ENCODE measurements at regions of chr10 and their contacts with region 1.

Region 1: GRCh38 chr10:3467052-3467951 is 294.7 kb upstream of the PITRM1 start:
- DNase-seq: peak; percentile 81 to 87
- ATAC-seq: peak; percentile 69 to 89 (median 82)
- H3K4me3 ChIP-seq: peak overlapping the region in 6 of 10 donors; percentile 7 to 35 (median 20)
- H3K27ac ChIP-seq: peak overlapping the region; percentile 46 to 94 (median 88)
- H3K4me1 ChIP-seq: peaks cover 0 to 71% (median 59%) of the 10 kb centered on the region in 9 donors
- H3K27me3 ChIP-seq: no peaks in the 10 kb centered on the region
- CTCF ChIP-seq: peak; percentile 24 to 71 (median 53)

Region 2: DNA sequence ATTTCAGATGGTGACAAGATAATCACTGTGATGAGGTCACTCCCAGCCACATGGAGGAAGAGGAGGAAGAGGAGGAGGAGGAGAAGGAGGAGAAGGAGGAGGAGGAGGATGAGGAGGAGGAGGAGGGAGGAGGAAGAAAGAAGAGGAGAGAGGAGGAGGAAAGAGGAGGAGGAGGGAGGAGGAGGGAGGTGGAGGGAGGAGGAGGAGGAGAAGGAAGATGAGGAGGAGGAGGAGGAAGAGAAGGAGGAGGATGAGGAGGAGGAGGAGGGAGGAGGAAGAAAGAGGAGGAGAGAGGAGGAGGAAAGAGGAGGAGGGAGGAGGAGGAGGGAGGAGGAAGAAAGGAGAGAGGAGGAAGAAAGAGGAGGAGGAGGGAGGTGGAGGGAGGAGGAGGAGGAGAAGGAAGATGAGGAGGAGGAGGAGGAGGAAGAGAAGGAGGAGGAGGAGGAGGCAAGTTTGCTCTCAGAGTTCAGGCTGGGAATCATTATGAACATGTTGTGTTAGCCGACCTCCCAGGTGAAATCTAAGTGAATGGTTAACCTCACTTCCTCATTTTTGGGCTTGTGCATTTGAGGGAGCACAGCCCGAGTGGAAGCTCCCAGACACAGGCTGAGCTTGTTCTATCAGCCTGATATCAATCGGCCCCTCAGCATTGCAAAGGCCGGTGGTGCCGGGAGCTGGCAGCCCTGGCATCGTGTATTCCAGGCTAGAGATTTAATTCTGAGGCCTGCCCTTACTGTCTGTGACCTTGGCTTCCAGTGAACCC is 58.5 kb before region 1 on chr10:
- intact Hi-C with region 1: no loop called
- DNase-seq: no peak
- ATAC-seq: no peak
- H3K4me3 ChIP-seq: no peak overlapping the region
- H3K27ac ChIP-seq: no peak overlapping the region
- H3K4me1 ChIP-seq: peaks cover 0 to 20% (median 4%) of the 10 kb centered on the region in 9 donors
- H3K27me3 ChIP-seq: no peaks in the 10 kb centered on the region
- CTCF ChIP-seq: no peak

Region 3: DNA sequence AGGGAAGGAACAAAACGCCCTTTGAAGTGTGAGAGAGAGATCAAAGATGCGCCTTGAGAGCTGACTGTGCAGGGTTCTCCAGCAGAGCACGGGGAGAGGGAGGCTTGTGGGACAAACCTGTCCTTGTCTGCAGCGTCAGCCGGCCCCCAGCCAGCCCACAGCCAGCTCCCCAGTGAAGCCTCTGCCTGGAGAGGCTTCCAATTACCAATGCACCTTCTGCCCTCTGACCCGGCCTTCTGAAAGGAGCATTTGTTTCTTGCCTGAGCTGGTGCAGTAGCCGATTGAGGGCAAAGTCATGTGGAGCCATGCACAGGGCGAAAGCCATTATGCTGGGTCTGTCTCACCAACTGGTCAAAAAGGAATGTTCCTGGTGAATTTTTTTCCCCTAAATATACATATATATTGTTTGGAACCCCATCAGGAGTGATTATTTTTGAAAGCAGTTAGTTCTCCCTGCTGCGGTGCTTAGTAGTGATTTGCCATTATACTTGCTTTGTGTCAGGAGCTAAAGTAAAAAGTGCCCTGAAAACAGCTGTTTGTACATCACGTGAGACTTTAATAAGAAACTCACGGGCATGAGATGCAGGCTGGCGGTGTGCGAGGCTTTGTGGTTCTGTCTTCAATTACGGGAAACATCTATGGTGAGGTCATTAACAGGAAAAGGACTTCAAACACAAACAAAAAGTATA is 49.1 kb after region 1 on chr10:
- intact Hi-C with region 1: loop called in 1 of 10 experiments (anchors 5 kb)
- DNase-seq: no peak
- ATAC-seq: peak in 1 of 8 donors; percentile 37
- H3K4me3 ChIP-seq: no peak overlapping the region
- H3K27ac ChIP-seq: peak overlapping the region in 3 of 10 donors; percentile 25 to 76 (median 68)
- H3K4me1 ChIP-seq: peaks cover 0 to 20% (median 6%) of the 10 kb centered on the region in 9 donors
- H3K27me3 ChIP-seq: no peaks in the 10 kb centered on the region
- CTCF ChIP-seq: no peak

Region 4: DNA sequence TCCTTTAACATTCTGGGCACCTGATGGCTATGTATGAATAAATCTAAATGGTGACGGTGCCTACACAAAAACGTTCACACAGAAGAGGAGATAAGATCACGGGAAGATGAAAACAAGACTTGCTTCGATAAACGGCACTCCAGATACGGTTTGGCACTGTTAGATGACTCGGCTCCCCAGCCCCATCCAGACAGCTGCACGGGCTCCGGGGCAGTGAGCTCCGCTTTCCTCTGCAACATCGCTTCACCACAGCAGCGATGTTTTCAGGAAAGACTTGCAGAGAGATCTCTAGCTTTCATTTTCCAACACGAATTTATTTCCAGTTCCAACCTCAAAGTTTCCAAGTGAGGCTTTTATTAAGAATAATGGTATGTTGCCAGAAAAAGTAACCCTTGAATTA is 185.6 kb after region 1 on chr10:
- intact Hi-C with region 1: no loop called
- DNase-seq: no peak
- ATAC-seq: no peak
- H3K4me3 ChIP-seq: peak overlapping the region in 7 of 10 donors; percentile 3 to 41 (median 16)
- H3K27ac ChIP-seq: no peak overlapping the region
- H3K4me1 ChIP-seq: peaks cover 0 to 10% (median 0%) of the 10 kb centered on the region in 9 donors
- H3K27me3 ChIP-seq: no peaks in the 10 kb centered on the region
- CTCF ChIP-seq: no peak

Region 5: DNA sequence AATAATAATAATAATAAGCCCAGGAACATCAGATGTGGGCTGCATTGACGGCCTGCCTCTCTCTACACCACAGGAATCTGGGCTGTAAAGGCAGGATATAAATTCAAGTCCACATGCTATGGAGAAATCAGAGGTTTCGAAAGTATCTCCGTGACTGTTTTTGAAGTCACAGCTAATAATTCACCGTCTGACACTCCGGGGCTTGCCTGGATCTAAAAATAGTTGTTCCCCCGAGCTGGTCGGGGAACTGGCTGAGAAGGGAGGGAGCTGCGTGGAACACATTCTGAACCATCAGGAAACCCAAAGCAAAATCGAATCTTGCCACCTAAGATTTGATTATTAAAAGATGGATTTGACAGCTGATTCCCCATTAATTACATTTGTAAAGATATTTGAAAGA is 282.3 kb after region 1 on chr10:
- intact Hi-C with region 1: loop called in 1 of 10 experiments (anchors 5 kb)
- DNase-seq: no peak
- ATAC-seq: peak; percentile 47 to 81 (median 73)
- H3K4me3 ChIP-seq: peak overlapping the region in 8 of 10 donors; percentile 2 to 37 (median 30)
- H3K27ac ChIP-seq: peak overlapping the region; percentile 6 to 84 (median 76)
- H3K4me1 ChIP-seq: peaks cover 0 to 52% (median 43%) of the 10 kb centered on the region in 9 donors
- H3K27me3 ChIP-seq: no peaks in the 10 kb centered on the region
- CTCF ChIP-seq: no peak

Region 6: GRCh38 chr10:3776796-3777571 is 309.7 kb after region 1 on chr10:
- intact Hi-C with region 1: loop called in 6 of 10 experiments (anchors 5 to 10 kb)
- DNase-seq: peak in 1 of 2 donors; percentile 57
- ATAC-seq: peak in 2 of 8 donors; percentile 39 to 43
- H3K4me3 ChIP-seq: peak overlapping the region in 3 of 10 donors; percentile 4 to 96 (median 67)
- H3K27ac ChIP-seq: peak overlapping the region in 9 of 10 donors; percentile 56 to 100 (median 100)
- H3K4me1 ChIP-seq: peaks cover 26 to 82% (median 72%) of the 10 kb centered on the region in 9 donors
- H3K27me3 ChIP-seq: no peaks in the 10 kb centered on the region
- CTCF ChIP-seq: no peak

Measured in heart right ventricle (tissue), 16 donors.